ENCODE measurements at regions of chr19 and their contacts with region 1.

Region 1: DNA sequence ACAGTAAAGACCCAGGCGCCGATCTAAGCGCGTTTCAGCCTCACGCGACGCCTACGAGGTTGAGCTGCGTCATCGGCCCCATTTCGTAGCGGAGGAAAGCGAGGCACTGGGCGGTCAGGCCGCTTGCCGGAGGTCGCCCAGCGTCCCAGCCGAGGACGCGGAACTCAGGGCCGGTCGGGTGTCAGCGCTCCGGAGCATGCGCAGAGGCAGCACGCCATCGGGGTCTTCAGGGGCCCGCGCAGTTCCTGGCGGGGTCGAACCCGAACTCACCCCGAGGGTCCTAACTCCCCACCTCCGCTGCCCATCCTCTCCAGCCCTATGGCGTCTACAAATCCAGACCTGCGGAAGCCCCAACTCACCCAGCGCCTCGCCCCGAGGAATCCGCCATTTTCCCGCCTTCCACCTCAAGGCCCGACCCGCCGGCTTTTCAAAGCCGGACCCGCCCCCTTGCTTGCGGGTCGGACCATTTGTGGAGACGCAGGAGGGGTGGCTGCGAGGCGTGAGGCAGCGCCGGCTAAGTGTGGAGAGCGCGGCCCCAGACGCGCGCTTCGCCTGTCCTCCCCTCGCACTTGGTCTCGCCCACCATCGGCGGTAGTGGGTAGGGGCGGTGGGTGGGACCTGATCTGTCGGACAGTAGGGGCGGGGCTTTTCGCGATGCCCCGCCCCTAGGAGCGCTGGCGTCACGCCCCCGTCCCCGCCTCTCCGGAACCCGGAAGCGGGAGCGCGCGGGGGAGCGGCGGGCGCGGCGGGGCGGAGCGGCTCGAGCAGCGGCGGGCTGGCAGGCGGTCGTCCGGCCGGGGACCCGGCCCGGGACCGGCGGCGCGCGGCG is at the starts of genes HAUS8 and MYO9B:
- DNase-seq: peak; percentile 98 to 99
- ATAC-seq: peak; percentile 94
- H3K4me3 ChIP-seq: peak within 1 kb of the TSS; percentile 73 to 85 (median 80)
- H3K27ac ChIP-seq: peak within 1 kb of the TSS; percentile 79 to 84 (median 80)
- H3K4me1 ChIP-seq: peaks cover 18 to 33% of the 10 kb centered on the region in 2 donors
- H3K27me3 ChIP-seq: no peaks in the 10 kb centered on the region
- CTCF ChIP-seq: peak in 1 of 5 experiments; percentile 11
- POLR2A ChIP-seq: peak; percentile 62 to 85
- total RNA-seq, gene HAUS8: 0.97 to 4.5 (median 3.3) TPM
- total RNA-seq, gene MYO9B: 20.0 to 22.1 (median 20.7) TPM

Region 2: GRCh38 chr19:16928916-16929315 is 146.3 kb before region 1 on chr19:
- in situ Hi-C with region 1: no loop called
- intact Hi-C with region 1: no loop called
- DNase-seq: no peak
- ATAC-seq: no peak
- H3K4me3 ChIP-seq: no peak overlapping the region
- H3K27ac ChIP-seq: no peak overlapping the region
- H3K4me1 ChIP-seq: no peaks in the 10 kb centered on the region
- H3K27me3 ChIP-seq: no peaks in the 10 kb centered on the region
- CTCF ChIP-seq: no peak
- POLR2A ChIP-seq: no peak

Region 3: GRCh38 chr19:17107525-17108452 is 32.5 kb after region 1 on chr19:
- in situ Hi-C with region 1: no loop called
- intact Hi-C with region 1: no loop called
- DNase-seq: peak; percentile 54 to 86
- ATAC-seq: peak; percentile 80 to 83
- H3K4me3 ChIP-seq: no peak overlapping the region
- H3K27ac ChIP-seq: peak overlapping the region; percentile 63 to 73 (median 65)
- H3K4me1 ChIP-seq: peaks cover 0 to 3% of the 10 kb centered on the region in 2 donors
- H3K27me3 ChIP-seq: no peaks in the 10 kb centered on the region
- CTCF ChIP-seq: no peak
- POLR2A ChIP-seq: no peak

Region 4: DNA sequence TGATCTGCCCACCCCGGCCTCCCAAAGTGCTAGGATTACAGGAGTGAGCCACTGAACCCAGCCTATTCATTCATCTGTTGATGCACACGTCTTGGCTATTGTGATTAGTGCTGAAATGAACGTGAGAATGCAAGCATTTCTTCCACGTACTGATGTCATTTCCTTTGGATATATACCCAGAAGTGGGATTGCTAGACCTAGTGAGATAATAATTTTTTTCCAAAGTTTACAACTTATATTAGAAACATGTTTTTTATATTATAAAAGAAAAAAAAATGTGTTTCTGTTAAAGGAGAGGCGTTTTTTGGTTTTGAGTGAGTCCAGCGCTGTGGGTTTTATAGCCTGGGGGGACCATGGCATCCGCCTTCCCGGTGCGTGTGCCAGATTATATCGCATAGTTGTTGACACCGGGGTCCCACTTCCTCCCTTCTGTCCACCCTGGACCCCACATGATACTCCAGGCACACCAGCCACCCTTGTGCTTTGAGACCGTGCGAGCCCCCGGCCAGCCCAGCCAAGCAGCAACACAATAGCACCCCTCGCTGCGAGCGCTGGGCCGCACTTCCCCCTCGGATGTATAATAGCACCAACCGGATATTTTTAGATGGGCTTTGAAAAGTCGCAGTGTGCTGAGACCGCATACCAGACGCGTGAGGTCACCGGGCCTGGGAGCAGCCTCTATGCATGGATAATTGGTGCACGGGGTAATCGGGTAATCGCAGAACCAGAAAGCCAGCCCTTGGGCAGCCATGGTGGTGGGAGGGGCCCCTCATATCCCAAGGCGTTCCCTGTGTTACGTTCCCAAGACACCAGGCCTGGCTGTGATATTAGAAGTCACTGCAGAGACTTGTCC is 60.0 kb after region 1 on chr19:
- in situ Hi-C with region 1: no loop called
- intact Hi-C with region 1: loop called (anchors 2 kb)
- DNase-seq: peak; percentile 76 to 85
- ATAC-seq: peak; percentile 90 to 96
- H3K4me3 ChIP-seq: peak overlapping the region; percentile 12 to 47 (median 34)
- H3K27ac ChIP-seq: peak overlapping the region; percentile 75 to 82 (median 82)
- H3K4me1 ChIP-seq: peaks cover 33 to 34% of the 10 kb centered on the region in 2 donors
- H3K27me3 ChIP-seq: no peaks in the 10 kb centered on the region
- CTCF ChIP-seq: peak in 4 of 5 experiments; percentile 21 to 48 (median 34)
- POLR2A ChIP-seq: peak in 1 of 2 donors; percentile 37

Region 5: DNA sequence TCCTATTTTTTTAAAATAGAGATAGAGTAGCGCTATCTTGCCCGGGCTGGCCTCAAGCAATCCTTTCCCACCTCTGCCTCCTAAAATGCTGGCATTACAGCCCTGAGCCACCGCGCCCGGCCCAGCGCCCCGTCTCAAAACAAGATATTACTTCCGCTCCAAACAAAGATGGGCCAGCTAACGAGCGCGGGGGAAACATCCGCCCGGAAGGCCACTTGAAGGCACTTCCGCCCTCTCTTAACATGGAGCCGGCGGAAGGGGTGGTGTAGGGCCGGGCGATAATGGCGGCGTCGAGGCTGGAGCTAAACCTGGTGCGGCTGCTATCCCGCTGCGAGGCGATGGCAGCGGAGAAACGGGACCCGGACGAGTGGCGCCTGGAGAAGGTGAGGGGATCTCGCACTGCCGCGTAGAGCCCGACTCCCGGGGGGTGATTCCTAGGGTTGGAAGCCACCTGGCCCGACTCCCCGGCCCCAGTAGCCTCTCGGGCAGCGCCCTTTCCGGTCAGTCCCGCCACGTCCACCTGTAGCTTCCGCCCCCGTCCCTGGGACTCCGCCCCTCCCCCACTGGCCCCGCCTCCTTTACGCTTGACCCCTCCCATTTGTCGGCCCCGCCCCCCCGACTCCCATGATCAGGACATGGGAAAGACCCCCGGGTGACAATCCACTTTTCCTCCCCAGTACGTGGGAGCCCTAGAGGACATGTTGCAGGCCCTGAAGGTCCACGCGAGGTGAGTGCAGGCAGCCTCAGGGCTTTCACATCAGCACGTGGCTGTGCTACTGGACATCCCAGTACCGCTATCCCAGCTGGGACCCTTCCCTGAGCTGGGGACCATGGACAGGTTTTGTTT is 140.1 kb after region 1 on chr19 and contains the start of gene USE1:
- in situ Hi-C with region 1: no loop called
- intact Hi-C with region 1: loop called (anchors 1 kb)
- DNase-seq: peak; percentile 86 to 89
- ATAC-seq: peak; percentile 98 to 99
- H3K4me3 ChIP-seq: peak within 1 kb of the TSS; percentile 81 to 88 (median 84)
- H3K27ac ChIP-seq: peak within 1 kb of the TSS; percentile 85 to 91 (median 89)
- H3K4me1 ChIP-seq: peaks cover 9 to 14% of the 10 kb centered on the region in 2 donors
- H3K27me3 ChIP-seq: no peaks in the 10 kb centered on the region
- CTCF ChIP-seq: no peak
- POLR2A ChIP-seq: peak in 1 of 2 donors; percentile 31
- total RNA-seq, gene USE1: 14.1 to 39.9 (median 22.3) TPM